CD8-positive, alpha-beta T cell (primary cell): ENCODE measurements at regions of chr17 and their contacts with region 1.

Region 1: DNA sequence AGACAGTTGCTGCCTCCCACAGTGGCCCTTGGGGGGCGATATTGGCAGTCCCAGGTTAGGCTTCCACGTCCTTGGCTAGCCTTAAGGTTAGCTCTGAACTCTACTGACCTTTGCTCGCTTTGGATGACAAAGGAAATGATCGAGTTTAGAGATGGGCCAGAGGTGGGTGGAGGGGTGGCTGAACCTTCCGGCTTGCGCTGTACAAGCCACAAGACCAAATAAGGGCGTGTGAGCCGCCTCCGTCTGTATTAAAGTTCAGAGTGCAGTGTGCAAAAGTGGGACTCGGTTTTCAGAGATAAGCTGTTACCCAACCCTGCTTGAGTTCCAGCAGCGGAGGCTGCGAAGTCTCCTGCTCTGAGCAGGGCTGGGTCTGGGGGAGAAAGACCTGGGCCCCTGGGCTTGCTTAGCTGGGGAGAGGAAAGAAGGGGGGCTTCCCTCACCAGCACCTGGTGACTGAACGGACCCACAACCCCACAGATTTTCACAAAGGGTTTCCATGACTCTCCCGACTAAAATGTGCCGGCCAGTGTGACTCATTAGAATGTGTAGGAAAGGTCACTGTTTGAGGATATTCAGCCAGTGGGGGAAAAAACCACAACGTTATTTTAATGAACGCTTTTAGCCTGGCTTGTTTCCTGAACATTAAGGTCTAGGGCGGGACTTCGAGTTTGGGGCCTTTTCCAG is 67.2 kb downstream of the CENPV start:
- DNase-seq: peak; percentile 48 to 91 (median 77)
- ATAC-seq: peak; percentile 93
- H3K4me3 ChIP-seq: peak overlapping the region; percentile 19 to 27
- H3K4me3 Mint-ChIP-seq: peak overlapping the region; percentile 75
- H3K27ac ChIP-seq: peak overlapping the region; percentile 60 to 86
- H3K27ac Mint-ChIP-seq: peak overlapping the region; percentile 99
- H3K4me1 ChIP-seq: peaks cover 49% of the 10 kb centered on the region
- H3K4me1 Mint-ChIP-seq: peaks cover 53% of the 10 kb centered on the region
- H3K27me3 ChIP-seq: no peaks in the 10 kb centered on the region
- H3K27me3 Mint-ChIP-seq: no peaks in the 10 kb centered on the region
- CTCF ChIP-seq: peak; percentile 37

Region 2: GRCh38 chr17:16052486-16052885 is 233.6 kb before region 1 on chr17:
- CTCF ChIA-PET with region 1: no interaction called
- POLR2A ChIA-PET with region 1: no interaction called
- intact Hi-C with region 1: no loop called
- DNase-seq: no peak
- ATAC-seq: no peak
- H3K4me3 ChIP-seq: no peak overlapping the region
- H3K4me3 Mint-ChIP-seq: no peak overlapping the region
- H3K27ac ChIP-seq: no peak overlapping the region
- H3K27ac Mint-ChIP-seq: peak overlapping the region; percentile 20
- H3K4me1 ChIP-seq: no peaks in the 10 kb centered on the region
- H3K4me1 Mint-ChIP-seq: peaks cover 23% of the 10 kb centered on the region
- H3K27me3 ChIP-seq: no peaks in the 10 kb centered on the region
- H3K27me3 Mint-ChIP-seq: no peaks in the 10 kb centered on the region
- CTCF ChIP-seq: no peak

Region 3: DNA sequence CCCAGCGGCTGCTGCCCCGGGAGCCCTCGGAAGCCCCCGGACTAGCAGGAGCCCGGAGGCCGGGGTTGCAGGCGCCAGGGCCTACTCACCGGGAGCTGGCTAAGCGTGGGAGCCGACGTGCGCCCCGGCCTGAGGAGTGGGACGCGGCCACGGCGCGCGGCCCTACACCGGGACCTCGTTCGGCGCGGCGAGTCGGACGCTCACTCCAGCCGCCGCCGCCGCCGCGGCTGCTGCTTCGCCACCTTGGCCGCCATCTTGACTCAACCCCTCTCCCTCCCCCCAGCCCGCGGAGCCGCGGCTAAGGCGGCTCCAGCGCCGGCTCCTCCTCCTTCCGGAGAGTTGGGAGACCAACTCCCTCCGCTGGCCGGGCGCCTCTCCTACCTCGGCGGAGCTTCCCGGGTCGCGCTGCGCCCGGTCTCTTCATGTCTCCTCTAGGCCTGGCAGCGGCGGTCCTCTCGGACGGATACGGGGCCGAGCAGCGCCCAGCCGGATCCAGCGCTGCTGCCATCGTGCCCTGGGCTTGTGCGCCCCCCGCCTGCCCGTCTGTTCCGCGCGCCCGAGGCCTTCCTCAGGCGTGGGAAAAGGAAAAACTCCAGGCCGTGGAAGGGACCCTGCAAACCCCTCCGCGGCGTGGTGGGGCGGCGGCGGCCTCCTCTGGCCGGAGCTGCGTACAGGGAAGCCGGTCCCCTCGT is 70.7 kb before region 1 on chr17 and contains the start of gene NCOR1:
- CTCF ChIA-PET with region 1: interaction called, 3 read pairs
- POLR2A ChIA-PET with region 1: interaction called, 6 read pairs
- intact Hi-C with region 1: loop called (anchors 2 kb)
- DNase-seq: peak; percentile 75 to 94 (median 89)
- ATAC-seq: peak; percentile 87
- H3K4me3 ChIP-seq: peak within 1 kb of the TSS; percentile 70 to 83
- H3K4me3 Mint-ChIP-seq: peak within 1 kb of the TSS; percentile 93
- H3K27ac ChIP-seq: peak within 1 kb of the TSS; percentile 71 to 82
- H3K27ac Mint-ChIP-seq: peak within 1 kb of the TSS; percentile 95
- H3K4me1 ChIP-seq: peaks cover 44% of the 10 kb centered on the region
- H3K4me1 Mint-ChIP-seq: peaks cover 56% of the 10 kb centered on the region
- H3K27me3 ChIP-seq: no peaks in the 10 kb centered on the region
- H3K27me3 Mint-ChIP-seq: no peaks in the 10 kb centered on the region
- CTCF ChIP-seq: no peak
- total RNA-seq, gene NCOR1: 119 TPM

Region 4: DNA sequence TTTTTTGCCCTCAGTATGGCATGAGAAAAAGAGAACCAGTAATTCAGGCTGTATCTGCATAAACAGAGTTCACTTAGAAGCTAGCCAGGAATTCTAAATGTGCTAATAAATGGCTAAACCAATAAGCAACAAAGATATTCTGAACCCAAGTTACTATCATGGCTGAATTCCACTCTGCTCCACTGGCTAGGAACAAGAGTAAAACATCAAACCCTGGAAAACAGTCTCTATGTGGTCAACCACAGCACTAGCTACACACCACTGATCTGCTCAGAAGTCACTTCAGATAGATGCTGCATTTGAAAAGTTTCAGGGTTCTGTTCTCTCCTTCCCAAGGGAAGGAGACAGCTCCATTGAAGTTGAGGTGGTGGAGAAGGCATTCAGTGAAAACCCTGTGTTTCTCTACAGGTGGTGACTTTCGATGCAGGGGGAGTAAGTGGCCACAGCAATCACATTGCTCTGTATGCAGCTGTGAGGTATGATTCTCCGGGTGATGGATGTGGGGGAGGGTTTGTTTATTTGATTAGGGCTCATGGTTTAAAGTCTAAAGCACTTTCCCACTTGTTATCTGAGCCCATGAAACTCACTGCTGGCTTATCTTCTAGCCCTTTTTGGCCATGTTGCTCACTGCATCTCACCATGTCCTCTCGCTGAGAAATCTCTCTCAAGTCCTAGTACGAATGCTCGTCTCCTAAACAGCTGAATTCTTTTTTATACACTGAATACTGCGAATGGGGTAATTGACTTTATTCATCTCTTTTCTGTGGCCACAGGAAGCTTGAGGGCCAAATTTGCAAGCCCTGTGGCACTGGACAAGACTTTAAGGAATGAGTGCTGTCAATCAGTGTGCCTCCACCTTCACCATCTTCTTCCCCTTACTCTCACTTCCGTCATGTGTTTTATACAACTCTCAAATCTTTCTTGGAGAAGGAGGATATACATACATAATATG is 27.3 kb after region 1 on chr17:
- CTCF ChIA-PET with region 1: no interaction called
- POLR2A ChIA-PET with region 1: no interaction called
- intact Hi-C with region 1: no loop called
- DNase-seq: no peak
- ATAC-seq: no peak
- H3K4me3 ChIP-seq: no peak overlapping the region
- H3K4me3 Mint-ChIP-seq: no peak overlapping the region
- H3K27ac ChIP-seq: no peak overlapping the region
- H3K27ac Mint-ChIP-seq: no peak overlapping the region
- H3K4me1 ChIP-seq: peaks cover 7% of the 10 kb centered on the region
- H3K4me1 Mint-ChIP-seq: peaks cover 24% of the 10 kb centered on the region
- H3K27me3 ChIP-seq: no peaks in the 10 kb centered on the region
- H3K27me3 Mint-ChIP-seq: no peaks in the 10 kb centered on the region
- CTCF ChIP-seq: no peak

Region 5: DNA sequence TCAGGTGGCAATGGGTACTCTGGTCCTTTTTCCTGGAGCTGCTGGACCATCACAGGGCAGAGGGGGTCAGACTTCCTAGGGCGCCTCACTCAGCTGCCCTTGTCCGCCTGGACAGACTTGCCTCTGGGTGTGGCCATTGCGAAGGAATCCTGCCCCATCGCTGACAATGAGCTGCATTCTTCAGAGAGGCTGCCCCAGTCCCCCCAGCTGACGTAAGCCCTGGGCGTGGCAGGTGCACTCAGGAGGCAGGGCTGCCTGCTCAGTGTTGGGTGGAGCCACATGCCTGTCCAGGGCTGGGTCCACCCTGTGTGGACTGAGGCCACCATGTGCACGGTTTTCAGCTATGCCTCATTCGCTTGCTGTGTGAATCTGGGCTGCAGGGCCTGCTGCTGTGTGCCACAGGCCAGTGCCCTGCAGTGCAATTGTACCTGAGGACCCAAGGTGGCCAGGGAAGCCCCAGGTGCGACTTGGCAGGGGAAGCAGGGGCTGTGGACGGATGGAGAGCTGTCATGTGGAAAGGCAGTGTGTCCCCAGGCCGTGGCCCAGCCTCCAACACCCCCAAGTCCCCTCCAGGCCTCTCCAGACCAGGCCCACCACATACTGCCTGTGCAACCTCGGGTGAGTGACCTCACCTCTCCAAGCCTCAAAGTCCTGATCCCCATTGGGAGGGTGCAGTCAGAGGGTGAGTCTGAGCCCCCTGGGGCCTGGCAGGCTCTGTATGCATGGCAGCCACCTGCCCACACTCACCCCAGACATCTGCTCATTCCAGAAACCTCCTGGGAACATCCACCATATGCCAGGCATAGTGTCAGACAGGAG is 742.2 kb after region 1 on chr17:
- CTCF ChIA-PET with region 1: no interaction called
- POLR2A ChIA-PET with region 1: no interaction called
- intact Hi-C with region 1: no loop called
- DNase-seq: no peak
- ATAC-seq: no peak
- H3K4me3 ChIP-seq: no peak overlapping the region
- H3K4me3 Mint-ChIP-seq: no peak overlapping the region
- H3K27ac ChIP-seq: no peak overlapping the region
- H3K27ac Mint-ChIP-seq: no peak overlapping the region
- H3K4me1 ChIP-seq: no peaks in the 10 kb centered on the region
- H3K4me1 Mint-ChIP-seq: no peaks in the 10 kb centered on the region
- H3K27me3 ChIP-seq: no peaks in the 10 kb centered on the region
- H3K27me3 Mint-ChIP-seq: no peaks in the 10 kb centered on the region
- CTCF ChIP-seq: no peak